ENCODE measurements at regions of chr1 and their contacts with region 1.

Region 1: DNA sequence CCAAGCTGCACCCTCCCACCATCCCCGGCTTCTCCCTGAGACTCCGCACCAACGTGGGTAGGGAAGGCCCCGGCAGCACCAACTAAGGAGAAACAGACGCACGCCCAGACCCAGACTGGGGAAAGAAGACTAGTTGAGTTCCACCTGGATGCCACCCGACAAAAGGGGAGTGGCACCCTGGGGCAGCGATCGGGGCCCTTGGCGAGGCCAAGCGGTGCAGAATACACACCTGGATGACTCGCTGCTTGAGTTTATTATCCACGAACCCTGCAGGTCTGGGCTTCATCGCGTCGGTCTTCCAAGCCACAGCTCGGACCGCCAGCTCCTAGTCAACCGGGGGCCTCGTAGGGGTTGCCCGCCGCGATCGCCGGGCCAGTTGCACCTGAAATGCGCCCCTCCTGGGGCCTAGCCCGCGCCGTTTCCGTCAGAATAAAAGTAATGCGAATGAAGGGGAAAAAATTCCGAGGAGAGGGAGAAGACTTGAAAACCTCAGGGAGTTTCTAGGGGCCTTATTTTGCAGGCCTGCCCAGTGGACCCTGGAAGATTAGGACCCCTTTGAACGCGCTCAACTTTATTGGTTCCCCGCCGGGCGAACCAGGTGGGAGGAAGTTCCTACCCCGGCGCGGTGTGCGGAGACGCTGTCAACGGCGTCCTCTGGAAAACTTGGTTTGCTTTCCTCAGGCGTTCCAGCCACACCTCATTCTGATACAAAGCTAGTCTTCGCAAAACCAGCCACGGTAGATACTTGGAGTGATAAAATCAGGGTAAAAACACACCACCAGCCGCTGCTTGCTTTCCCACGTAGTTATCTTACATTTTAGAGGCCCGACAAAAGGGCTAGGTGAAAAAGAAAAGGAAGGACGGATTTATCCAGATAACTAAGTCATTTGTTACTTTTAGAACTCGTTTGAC is at the start of gene NVL:
- DNase-seq: peak; percentile 87
- ATAC-seq: peak; percentile 98
- total RNA-seq, gene NVL: 8.4 TPM

Region 2: DNA sequence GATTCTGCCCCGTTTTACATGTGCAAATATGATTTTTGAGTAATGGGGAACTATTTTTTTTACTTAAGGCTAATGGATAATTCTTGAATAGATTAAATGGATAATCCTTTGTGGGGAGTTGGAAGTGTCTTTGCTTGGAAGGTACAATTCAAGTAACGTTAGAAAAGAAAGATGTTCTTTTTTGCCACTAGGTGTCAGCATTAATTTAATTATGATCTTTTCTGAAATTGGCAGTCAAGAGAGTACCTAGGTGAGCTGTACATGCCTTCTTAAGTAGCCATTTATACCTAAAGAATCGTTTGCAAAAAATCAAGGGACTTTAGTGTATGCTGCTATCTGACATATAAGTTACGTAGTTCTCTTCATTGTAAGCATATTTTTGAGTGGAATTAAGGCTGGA is 214.0 kb before region 1 on chr1:
- intact Hi-C with region 1: loop called (anchors 5 kb)
- DNase-seq: no peak
- ATAC-seq: peak; percentile 36

Region 3: GRCh38 chr1:224170365-224171112 is 159.6 kb before region 1 on chr1:
- intact Hi-C with region 1: loop called (anchors 10 kb)
- DNase-seq: no peak
- ATAC-seq: peak; percentile 44